Prostate gland (tissue), 2 donors: ENCODE measurements at regions of chr16 and their contacts with region 1.

Region 1: GRCh38 chr16:22001591-22001990 is 675 bp upstream of the PDZD9 start:
- DNase-seq: no peak
- H3K4me3 ChIP-seq: no peak overlapping the region
- H3K27ac ChIP-seq: no peak overlapping the region
- H3K4me1 ChIP-seq: no peaks in the 10 kb centered on the region
- H3K27me3 ChIP-seq: no peaks in the 10 kb centered on the region
- CTCF ChIP-seq: no peak
- POLR2A ChIP-seq: no peak

Region 2: GRCh38 chr16:21962475-21962874 is 39.1 kb before region 1 on chr16:
- intact Hi-C with region 1: no loop called
- DNase-seq: no peak
- H3K4me3 ChIP-seq: no peak overlapping the region
- H3K27ac ChIP-seq: no peak overlapping the region
- H3K4me1 ChIP-seq: no peaks in the 10 kb centered on the region
- H3K27me3 ChIP-seq: no peaks in the 10 kb centered on the region
- CTCF ChIP-seq: no peak
- POLR2A ChIP-seq: no peak

Region 3: GRCh38 chr16:22077700-22078313 is 76.2 kb after region 1 on chr16:
- intact Hi-C with region 1: loop called (anchors 1 kb)
- DNase-seq: peak; percentile 50
- H3K4me3 ChIP-seq: no peak overlapping the region
- H3K27ac ChIP-seq: no peak overlapping the region
- H3K4me1 ChIP-seq: no peaks in the 10 kb centered on the region
- H3K27me3 ChIP-seq: no peaks in the 10 kb centered on the region
- CTCF ChIP-seq: peak; percentile 33 to 84 (median 72)
- POLR2A ChIP-seq: no peak

Region 4: GRCh38 chr16:22098405-22099255 is 97.0 kb after region 1 on chr16:
- intact Hi-C with region 1: loop called (anchors 5 kb)
- DNase-seq: no peak
- H3K4me3 ChIP-seq: no peak overlapping the region
- H3K27ac ChIP-seq: no peak overlapping the region
- H3K4me1 ChIP-seq: no peaks in the 10 kb centered on the region
- H3K27me3 ChIP-seq: no peaks in the 10 kb centered on the region
- CTCF ChIP-seq: peak in 3 of 4 experiments; percentile 35 to 55 (median 39)
- POLR2A ChIP-seq: no peak

Region 5: DNA sequence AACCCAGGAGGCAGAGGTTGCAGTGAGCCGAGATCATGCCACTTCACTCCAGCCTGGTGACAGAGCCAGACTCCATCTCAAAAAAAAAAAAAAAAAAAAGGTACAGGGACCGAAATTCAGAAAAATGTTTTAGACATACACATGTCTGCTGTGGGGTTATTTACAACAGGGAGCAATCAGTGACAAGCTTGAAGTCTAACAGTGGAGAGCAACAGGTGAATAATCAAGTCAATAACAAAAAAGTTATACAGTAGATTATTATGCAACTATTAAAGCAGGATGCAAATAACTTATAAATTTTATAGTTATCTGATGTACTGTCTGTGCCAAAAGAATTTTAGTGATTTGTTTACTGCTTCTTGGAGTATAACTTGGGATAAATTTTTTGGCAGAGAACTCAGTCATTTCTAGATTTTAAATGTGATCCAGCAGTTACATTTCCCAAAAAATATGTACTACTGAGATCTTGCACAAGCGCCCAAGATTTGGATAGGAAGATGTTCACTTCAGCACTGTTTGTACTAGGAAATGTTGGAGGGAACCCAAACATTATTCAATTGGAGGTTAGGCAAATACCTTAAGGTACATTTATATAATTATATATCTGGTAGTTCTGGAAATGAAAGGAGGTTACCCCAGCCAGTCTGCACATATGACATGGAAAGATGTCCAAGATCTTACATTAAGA is 238.6 kb after region 1 on chr16:
- intact Hi-C with region 1: no loop called
- DNase-seq: peak; percentile 51
- H3K4me3 ChIP-seq: no peak overlapping the region
- H3K27ac ChIP-seq: peak overlapping the region; percentile 69 to 73
- H3K4me1 ChIP-seq: peaks cover 13% of the 10 kb centered on the region
- H3K27me3 ChIP-seq: no peaks in the 10 kb centered on the region
- CTCF ChIP-seq: no peak
- POLR2A ChIP-seq: no peak